Activated naive CD8-positive, alpha-beta T cell treated with anti-CD3 and anti-CD28 coated beads, Interleukin-2, amount 10 ng/mL, durations not matched to agents 7 days and 5 days (primary cell): ENCODE measurements at regions of chr5 and their contacts with region 1.

Region 1: DNA sequence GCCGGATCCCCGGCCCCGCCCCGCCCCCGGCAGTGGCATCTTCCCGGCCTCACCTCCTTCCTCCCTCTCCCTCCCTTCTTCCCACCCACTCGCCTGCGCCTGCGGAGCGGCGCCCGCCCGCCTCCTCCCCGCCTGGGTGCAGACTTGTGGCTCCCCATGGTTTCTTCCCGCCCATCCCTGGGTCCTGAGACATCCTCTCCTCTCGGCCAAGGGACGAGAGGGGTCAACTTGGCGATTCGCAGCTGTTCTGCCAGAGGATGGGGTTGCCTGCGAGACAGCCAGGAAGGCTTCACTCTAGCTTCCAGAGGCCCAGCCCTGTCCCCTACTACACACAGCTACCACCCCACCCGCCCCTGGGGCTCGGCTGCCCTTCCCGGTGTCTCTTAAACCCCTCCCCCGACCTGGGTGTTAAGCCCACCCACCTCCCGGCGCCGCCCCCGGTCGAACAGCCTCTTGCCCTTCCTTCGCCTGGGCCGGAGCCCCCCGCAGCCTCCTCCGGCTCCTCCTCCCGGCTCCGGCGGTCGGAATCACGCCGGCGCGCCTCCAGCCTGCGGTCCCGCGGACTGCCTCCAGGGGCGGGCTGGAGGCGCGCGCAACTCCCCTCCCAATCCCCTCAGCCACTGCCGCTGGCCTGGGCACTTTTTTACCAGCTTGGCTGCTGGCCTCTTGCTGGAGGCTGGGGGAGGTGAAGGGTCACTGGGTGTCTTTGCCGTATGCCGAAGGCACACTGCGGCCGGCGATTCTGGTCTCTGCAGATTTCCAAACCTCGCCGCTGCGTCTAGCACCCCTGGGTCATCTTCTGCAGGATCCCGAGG is 1.9 kb downstream of the JADE2 start:
- DNase-seq: peak; percentile 86
- ATAC-seq: peak; percentile 49
- H3K4me3 Mint-ChIP-seq: peak overlapping the region; percentile 97
- H3K27ac Mint-ChIP-seq: peak overlapping the region; percentile 94
- H3K4me1 Mint-ChIP-seq: peaks cover 38% of the 10 kb centered on the region
- H3K27me3 Mint-ChIP-seq: no peaks in the 10 kb centered on the region

Region 2: DNA sequence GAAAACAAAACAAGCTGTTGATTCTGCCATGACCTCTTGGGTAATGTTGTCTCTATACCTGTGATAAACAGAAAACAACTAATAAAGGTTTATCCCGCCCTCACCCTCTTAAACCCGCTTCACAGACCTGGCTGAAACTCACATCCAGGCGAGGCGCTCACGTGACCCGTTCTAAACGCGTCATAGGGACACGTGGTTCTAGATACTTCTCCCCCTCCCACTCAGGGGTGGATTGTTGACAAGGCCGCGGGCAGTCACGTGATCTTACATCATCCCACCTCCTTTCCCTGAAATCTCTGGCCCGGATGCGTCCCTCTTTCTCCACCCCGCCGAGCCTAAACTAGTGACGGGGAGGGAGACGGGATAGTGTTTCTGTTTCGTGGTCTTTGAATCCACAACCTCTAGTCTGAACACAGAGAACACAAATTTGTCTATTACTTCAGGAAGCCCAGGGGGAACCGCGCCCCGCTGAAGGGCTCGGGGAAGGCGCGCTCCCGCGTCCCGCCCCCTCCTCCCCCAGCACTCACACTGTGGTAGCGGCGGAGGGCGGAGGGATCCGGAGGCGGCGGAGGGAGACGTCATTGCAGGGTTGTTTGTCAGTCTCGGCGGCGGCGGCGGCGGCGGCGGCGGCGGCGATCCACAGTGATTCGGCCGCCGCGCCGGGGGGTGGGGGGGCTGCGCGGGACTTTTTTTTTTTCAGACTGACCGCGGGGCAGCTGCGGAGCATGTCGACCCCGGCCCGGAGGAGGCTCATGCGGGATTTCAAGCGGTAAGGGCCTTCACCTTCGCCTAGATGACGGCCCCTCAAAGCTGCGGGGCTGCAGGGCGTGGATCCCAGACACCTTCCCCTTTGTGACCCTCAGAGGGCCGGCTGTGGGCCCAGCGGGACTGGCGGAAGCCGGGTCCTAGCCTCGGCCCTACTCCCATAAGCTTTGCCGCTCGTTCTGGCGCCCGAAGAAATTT is 156.2 kb before region 1 on chr5 and contains the start of gene UBE2B:
- POLR2A ChIA-PET with region 1: interaction called, 46 read pairs
- DNase-seq: peak; percentile 97
- ATAC-seq: peak; percentile 75
- H3K4me3 Mint-ChIP-seq: peak within 1 kb of the TSS; percentile 91
- H3K27ac Mint-ChIP-seq: peak within 1 kb of the TSS; percentile 99
- H3K4me1 Mint-ChIP-seq: peaks cover 34% of the 10 kb centered on the region
- H3K27me3 Mint-ChIP-seq: no peaks in the 10 kb centered on the region
- total RNA-seq, gene UBE2B: 98.5 to 101 TPM

Region 3: GRCh38 chr5:134436523-134437339 is 90.6 kb before region 1 on chr5:
- POLR2A ChIA-PET with region 1: interaction called, 21 read pairs
- DNase-seq: peak; percentile 68
- ATAC-seq: peak; percentile 92
- H3K4me3 Mint-ChIP-seq: peak overlapping the region; percentile 60
- H3K27ac Mint-ChIP-seq: peak overlapping the region; percentile 81
- H3K4me1 Mint-ChIP-seq: peaks cover 22% of the 10 kb centered on the region
- H3K27me3 Mint-ChIP-seq: peaks cover 5% of the 10 kb centered on the region

Region 4: GRCh38 chr5:134503088-134503946 is 24.0 kb before region 1 on chr5:
- POLR2A ChIA-PET with region 1: interaction called, 40 read pairs
- DNase-seq: peak; percentile 68
- ATAC-seq: peak; percentile 99
- H3K4me3 Mint-ChIP-seq: peak overlapping the region; percentile 74
- H3K27ac Mint-ChIP-seq: peak overlapping the region; percentile 98
- H3K4me1 Mint-ChIP-seq: peaks cover 27% of the 10 kb centered on the region
- H3K27me3 Mint-ChIP-seq: no peaks in the 10 kb centered on the region

Region 5: DNA sequence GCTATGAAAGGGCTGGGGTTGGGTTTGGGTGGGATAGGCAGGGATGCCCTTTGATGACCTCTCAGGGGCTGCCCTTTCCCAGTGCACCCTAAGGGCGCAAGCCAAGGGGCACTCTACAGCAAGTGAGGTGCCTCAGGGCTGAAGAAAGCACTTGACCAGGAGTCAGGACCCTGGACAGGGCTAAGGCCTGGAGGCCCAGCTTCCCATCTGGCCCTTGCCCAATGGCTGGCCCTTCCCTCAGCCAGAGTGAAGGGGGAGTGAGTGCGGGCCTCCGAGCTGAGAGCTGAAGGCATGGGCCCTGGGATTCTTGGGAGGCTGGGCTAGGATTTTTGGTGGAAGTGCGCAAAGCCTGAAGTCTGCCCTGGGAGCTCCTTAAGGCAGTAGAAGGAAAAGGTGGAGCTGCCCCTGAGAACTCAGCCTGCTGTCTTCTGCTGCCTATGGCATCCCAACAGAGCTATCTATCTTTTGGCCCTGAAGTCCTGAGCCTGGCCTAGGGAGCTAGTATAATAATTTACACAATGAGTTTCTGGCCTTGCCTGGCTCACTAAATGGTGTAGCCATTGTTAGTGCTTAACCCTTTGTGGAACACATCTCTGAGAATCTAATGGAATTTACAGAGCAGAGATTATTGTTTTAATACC is 14.5 kb after region 1 on chr5:
- POLR2A ChIA-PET with region 1: interaction called, 12 read pairs
- DNase-seq: peak; percentile 46
- ATAC-seq: no peak
- H3K4me3 Mint-ChIP-seq: no peak overlapping the region
- H3K27ac Mint-ChIP-seq: no peak overlapping the region
- H3K4me1 Mint-ChIP-seq: peaks cover 40% of the 10 kb centered on the region
- H3K27me3 Mint-ChIP-seq: no peaks in the 10 kb centered on the region

Region 6: DNA sequence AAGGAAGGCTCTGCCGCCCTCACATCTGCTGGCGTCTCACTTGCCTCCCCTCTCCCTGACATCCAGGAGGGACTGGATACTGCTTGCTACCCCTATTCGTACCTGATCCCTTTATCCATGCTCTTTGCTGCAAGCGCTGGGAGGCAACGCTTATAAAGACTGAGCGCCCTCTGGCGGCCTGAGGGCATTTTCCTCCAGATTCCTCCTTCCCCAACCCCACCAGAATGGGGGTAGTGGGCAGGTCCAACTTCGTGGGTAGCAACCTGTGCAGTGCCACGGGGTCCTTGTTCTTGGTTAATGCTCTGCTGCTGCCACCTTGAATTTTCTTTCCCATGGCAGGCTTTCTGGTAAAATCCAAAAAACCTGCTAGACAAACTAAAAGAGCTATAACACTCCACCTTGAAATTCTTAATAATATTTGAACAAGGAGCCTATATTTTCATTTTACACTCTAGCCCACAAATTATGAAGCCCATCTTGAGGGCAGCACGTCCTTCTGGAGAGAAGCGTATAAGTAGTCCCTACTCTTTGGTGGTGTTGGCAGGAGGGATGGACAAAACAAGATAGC is 50.5 kb after region 1 on chr5:
- POLR2A ChIA-PET with region 1: no interaction called
- DNase-seq: peak; percentile 83
- ATAC-seq: peak; percentile 65
- H3K4me3 Mint-ChIP-seq: no peak overlapping the region
- H3K27ac Mint-ChIP-seq: no peak overlapping the region
- H3K4me1 Mint-ChIP-seq: no peaks in the 10 kb centered on the region
- H3K27me3 Mint-ChIP-seq: no peaks in the 10 kb centered on the region

Region 7: GRCh38 chr5:134609232-134609851 is 82.0 kb after region 1 on chr5:
- POLR2A ChIA-PET with region 1: no interaction called
- DNase-seq: no peak
- ATAC-seq: peak; percentile 43
- H3K4me3 Mint-ChIP-seq: peak overlapping the region; percentile 41
- H3K27ac Mint-ChIP-seq: peak overlapping the region; percentile 90
- H3K4me1 Mint-ChIP-seq: peaks cover 28% of the 10 kb centered on the region
- H3K27me3 Mint-ChIP-seq: no peaks in the 10 kb centered on the region